ENCODE measurements at regions of chr5 and their contacts with region 1.

Region 1: GRCh38 chr5:115544436-115545350 is at the start of gene FEM1C:
- DNase-seq: peak; percentile 86 to 97
- H3K4me3 ChIP-seq: peak within 1 kb of the TSS; percentile 81 to 97 (median 90)
- H3K27ac ChIP-seq: peak within 1 kb of the TSS; percentile 91
- H3K4me1 ChIP-seq: peaks cover 0 to 7% (median 2%) of the 10 kb centered on the region in 4 experiments; a peak in 5 of 7 replicates
- H3K27me3 ChIP-seq: no peaks in the 10 kb centered on the region
- CTCF ChIP-seq: no peak
- EP300 ChIP-seq: peak in 1 of 2 experiments; percentile 28; a peak in 1 of 3 replicates
- POLR2A ChIP-seq: peak; percentile 87 to 96
- RAD21 ChIP-seq: no peak
- total RNA-seq, gene FEM1C: 16.6 and 17.7 TPM in 2 replicates

Region 2: GRCh38 chr5:115296124-115297022 is 248.3 kb before region 1 on chr5 and contains the start of gene CCDC112:
- CTCF ChIA-PET with region 1: no interaction called
- POLR2A ChIA-PET with region 1: interaction called, 18 read pairs
- DNase-seq: peak; percentile 73 to 91
- H3K4me3 ChIP-seq: peak within 1 kb of the TSS; percentile 87 to 98 (median 90)
- H3K27ac ChIP-seq: peak within 1 kb of the TSS; percentile 53; the same call in 1 of the 2 replicates
- H3K4me1 ChIP-seq: peaks cover 0 to 3% (median 1%) of the 10 kb centered on the region in 4 experiments; a peak in 2 of 7 replicates
- H3K27me3 ChIP-seq: 0 out of 7 replicates have a peak, but pooled peaks cover 0 to 2% (median 0%) of the 10 kb centered on the region in 4 experiments
- CTCF ChIP-seq: no peak
- EP300 ChIP-seq: no peak
- POLR2A ChIP-seq: peak; percentile 81 to 88
- RAD21 ChIP-seq: peak in 1 of 2 experiments; percentile 8; a peak in 1 of 4 replicates
- total RNA-seq, gene CCDC112: 13.2 and 15.6 TPM in 2 replicates

Region 3: DNA sequence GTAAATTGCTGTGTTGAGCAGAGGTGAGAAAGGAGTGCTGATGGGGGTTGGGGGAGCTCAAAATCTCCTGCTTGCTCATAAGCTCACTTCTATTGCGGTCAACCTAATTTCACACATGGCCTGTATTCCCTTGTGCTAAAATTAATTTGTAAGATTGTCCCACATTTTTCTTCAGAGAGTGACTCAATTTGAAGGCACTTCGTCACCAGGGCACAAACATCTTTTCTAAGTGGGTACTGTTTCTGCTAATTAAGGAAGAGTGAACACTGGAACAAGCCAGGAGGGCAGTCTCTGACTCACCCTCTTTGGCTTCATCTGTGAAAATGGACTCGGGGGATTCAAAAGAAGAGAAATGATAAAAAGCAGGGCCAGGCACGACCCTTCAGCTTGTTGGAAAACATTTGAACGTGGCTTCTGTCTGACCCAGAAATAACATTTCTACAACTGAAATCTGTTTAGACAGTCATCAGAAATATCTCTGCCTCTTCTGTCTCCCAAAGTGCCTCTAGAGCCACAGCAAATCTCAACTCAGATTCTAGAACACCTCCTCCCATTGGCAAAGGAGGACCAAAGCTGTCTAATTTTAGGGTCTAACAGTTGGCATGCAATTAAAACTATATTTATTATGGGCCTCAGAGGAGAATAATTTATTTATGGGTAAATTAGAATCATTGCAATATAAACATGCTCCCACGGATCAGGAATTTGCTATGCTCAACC is 50.0 kb before region 1 on chr5:
- CTCF ChIA-PET with region 1: no interaction called
- POLR2A ChIA-PET with region 1: no interaction called
- DNase-seq: no peak
- H3K4me3 ChIP-seq: no peak overlapping the region
- H3K27ac ChIP-seq: no peak overlapping the region
- H3K4me1 ChIP-seq: peaks cover 0 to 6% (median 1%) of the 10 kb centered on the region in 4 experiments; a peak in 3 of 7 replicates
- H3K27me3 ChIP-seq: no peaks in the 10 kb centered on the region
- CTCF ChIP-seq: no peak
- EP300 ChIP-seq: no peak
- POLR2A ChIP-seq: no peak
- RAD21 ChIP-seq: no peak

Measured in H1 (cell line).